ENCODE measurements at regions of chr1 and their contacts with region 1.

Region 1: DNA sequence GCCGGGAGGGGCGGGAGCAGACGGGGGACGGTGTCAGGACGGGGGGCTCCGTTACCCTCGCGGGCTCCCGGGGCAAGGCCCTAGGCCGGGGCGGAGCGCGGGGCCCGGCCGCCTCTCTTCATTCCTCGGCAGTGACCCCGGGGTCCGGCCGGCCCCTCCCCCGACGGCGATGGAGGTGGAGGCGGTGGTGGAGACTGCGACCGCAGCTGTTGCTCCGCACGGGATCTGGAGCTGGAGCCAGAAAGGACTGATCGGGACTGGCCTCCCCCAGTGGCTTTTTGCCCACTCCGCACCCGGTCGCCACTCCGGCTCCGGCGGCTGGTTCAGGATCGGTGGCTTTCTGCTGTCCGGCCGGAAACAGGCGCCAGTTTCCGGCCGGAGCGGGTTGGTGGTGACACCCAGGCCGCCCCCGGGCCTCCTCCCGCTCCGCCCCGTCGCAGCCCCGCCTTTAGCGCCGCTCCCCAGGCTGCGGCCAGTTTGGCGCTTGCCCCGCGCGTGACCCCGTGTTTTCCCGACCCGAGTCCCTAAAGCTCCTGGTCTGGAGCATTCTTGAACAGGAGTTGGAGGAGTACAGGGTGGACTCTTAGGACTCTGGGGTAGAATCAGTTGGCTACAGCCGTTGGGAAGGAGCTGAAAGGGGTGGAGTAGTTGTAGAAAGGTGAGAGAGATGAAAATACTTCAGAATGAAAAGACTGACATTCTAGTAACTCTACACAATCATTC is at the start of gene OTUD7B:
- DNase-seq: peak; percentile 92 to 95
- ATAC-seq: peak; percentile 89 to 93 (median 92)
- H3K4me3 ChIP-seq: peak within 1 kb of the TSS; percentile 81
- H3K27ac ChIP-seq: peak within 1 kb of the TSS; percentile 96
- H3K4me1 ChIP-seq: peaks cover 39% of the 10 kb centered on the region
- H3K27me3 ChIP-seq: no peaks in the 10 kb centered on the region
- CTCF ChIP-seq: peak; percentile 3
- total RNA-seq, gene OTUD7B: 47.4 to 62.0 (median 59.4) TPM

Region 2: DNA sequence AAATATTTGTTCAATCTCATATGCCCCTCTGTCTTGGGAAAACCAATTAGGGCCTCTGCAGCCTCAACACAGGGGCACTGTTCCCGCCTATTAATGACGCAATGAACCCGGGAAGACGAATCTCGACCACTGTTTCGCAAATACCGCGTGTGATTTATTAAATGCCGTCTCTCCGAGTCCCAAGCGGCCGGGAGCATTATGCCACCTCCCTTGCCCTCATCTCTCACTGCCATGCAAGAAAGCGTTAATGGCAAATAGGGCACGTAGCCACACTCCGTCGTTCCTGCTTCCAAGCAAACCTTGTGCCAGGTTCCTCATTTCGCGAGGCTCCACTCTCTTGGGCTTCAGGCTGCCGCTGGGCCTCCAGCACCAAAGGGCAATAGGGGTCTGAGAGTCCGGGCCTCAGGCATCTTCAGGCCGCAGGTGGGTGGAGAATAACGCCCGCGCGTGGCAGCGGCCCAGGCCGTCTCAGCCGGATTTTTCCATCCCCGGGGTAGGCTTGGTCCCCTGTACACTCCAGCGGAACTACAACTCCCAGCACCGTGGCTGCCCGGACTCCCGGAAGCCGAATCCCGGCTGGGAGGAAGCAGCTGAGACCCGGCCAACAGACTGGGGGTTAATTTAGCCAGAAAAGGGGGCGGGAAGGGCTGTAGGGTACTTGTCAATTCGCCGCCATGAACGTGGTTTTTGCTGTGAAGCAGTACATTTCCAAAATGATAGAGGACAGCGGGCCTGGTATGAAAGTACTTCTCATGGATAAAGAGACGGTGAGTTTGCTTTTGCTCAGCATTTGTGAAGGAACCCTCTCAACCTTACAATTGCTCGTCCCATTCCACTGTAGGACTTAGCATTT is 56.9 kb after region 1 on chr1 and contains the start of gene VPS45:
- intact Hi-C with region 1: loop called in 1 of 2 experiments (anchors 2 kb)
- DNase-seq: peak; percentile 93 to 95
- ATAC-seq: peak; percentile 96 to 97 (median 96)
- H3K4me3 ChIP-seq: peak within 1 kb of the TSS; percentile 75
- H3K27ac ChIP-seq: peak within 1 kb of the TSS; percentile 85
- H3K4me1 ChIP-seq: peaks cover 23% of the 10 kb centered on the region
- H3K27me3 ChIP-seq: no peaks in the 10 kb centered on the region
- CTCF ChIP-seq: peak; percentile 6
- total RNA-seq, gene VPS45: 18.7 to 25.5 (median 19.2) TPM

Measured in psoas muscle (tissue), 8 donors.